B cell (primary cell): ENCODE measurements at regions of chr3 and their contacts with region 1.

Region 1: GRCh38 chr3:9792405-9793160 is at the starts of genes ARPC4 and TADA3:
- DNase-seq: peak; percentile 99
- ATAC-seq: peak; percentile 77
- H3K4me3 ChIP-seq: peak within 1 kb of the TSS; percentile 78 to 99 (median 94)
- H3K4me3 Mint-ChIP-seq: peak within 1 kb of the TSS; percentile 99
- H3K27ac ChIP-seq: peak within 1 kb of the TSS; percentile 93 to 99
- H3K27ac Mint-ChIP-seq: peak within 1 kb of the TSS; percentile 100
- H3K4me1 ChIP-seq: peaks cover 51 to 63% of the 10 kb centered on the region in 2 donors
- H3K4me1 Mint-ChIP-seq: peaks cover 57% of the 10 kb centered on the region
- H3K27me3 ChIP-seq: no peaks in the 10 kb centered on the region
- H3K27me3 Mint-ChIP-seq: no peaks in the 10 kb centered on the region
- CTCF ChIP-seq: no peak
- total RNA-seq, gene ARPC4: 174 and 179 TPM in 2 replicates
- total RNA-seq, gene TADA3: 43.4 and 45.6 TPM in 2 replicates

Region 2: DNA sequence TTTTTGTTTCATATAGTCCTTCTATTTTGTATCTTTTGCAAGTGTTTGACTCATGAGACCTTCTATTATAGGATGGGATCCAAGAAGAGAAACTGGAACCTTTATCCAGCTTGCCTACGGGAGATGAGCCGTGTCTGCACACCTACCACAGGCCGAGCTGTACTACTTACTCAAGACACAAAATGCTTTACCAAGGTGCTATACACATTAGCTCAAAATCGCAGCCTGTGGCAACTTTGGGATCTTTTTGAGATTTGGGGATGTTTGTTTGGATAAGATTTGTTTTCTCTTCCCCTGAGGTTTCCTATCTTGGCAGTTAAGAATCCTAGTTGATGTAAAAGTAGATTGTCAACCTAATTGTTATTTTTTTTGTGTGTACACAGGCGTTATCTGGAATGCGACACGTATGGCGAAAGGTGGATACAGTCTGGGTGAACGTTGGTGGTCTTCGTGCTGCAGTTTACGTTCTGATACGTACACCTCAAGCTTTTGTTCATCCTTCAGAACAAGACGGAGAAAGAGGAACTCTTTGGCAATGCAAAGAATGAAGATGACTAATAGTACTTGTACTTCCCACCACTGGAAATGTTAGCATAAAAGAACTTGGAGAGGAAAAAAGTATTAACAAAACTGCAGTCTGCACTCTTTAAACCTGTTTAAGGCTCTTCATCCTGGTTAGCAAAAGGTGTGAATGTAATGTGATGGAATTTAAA is 408.3 kb before region 1 on chr3:
- CTCF ChIA-PET with region 1: no interaction called
- POLR2A ChIA-PET with region 1: no interaction called
- intact Hi-C with region 1: no loop called
- DNase-seq: no peak
- ATAC-seq: no peak
- H3K4me3 ChIP-seq: no peak overlapping the region
- H3K4me3 Mint-ChIP-seq: no peak overlapping the region
- H3K27ac ChIP-seq: peak overlapping the region in 1 of 2 donors; percentile 48
- H3K27ac Mint-ChIP-seq: no peak overlapping the region
- H3K4me1 ChIP-seq: no peaks in the 10 kb centered on the region
- H3K4me1 Mint-ChIP-seq: peaks cover 9% of the 10 kb centered on the region
- H3K27me3 ChIP-seq: no peaks in the 10 kb centered on the region
- H3K27me3 Mint-ChIP-seq: no peaks in the 10 kb centered on the region
- CTCF ChIP-seq: no peak

Region 3: DNA sequence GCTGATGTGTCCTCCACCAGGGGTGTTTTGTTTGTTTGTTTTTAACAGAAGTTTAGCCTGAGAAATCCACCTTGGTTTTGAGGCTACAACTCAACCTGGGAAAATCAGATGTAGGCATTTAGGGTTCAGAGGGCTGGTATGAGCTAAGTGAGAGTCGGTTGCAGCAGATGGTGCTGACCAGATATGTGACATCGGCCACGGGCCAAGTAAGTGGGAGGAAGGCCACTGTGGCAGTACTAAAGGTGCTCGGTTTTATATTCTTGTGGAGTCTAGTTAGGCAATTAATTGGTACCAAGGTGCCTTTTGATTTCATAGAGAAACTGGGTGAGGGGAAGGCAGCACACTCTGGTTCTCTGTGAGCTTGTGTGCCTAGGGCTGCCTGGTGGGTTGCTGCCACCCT is 132.7 kb before region 1 on chr3:
- CTCF ChIA-PET with region 1: no interaction called
- POLR2A ChIA-PET with region 1: no interaction called
- intact Hi-C with region 1: no loop called
- DNase-seq: no peak
- ATAC-seq: no peak
- H3K4me3 ChIP-seq: no peak overlapping the region
- H3K4me3 Mint-ChIP-seq: no peak overlapping the region
- H3K27ac ChIP-seq: no peak overlapping the region
- H3K27ac Mint-ChIP-seq: no peak overlapping the region
- H3K4me1 ChIP-seq: peaks cover 2 to 14% of the 10 kb centered on the region in 2 donors
- H3K4me1 Mint-ChIP-seq: peaks cover 25% of the 10 kb centered on the region
- H3K27me3 ChIP-seq: no peaks in the 10 kb centered on the region
- H3K27me3 Mint-ChIP-seq: no peaks in the 10 kb centered on the region
- CTCF ChIP-seq: no peak

Region 4: GRCh38 chr3:9749645-9750555 is 42.7 kb before region 1 on chr3 and contains the start of gene OGG1:
- CTCF ChIA-PET with region 1: interaction called, 3 read pairs
- POLR2A ChIA-PET with region 1: interaction called, 39 read pairs
- intact Hi-C with region 1: loop called (anchors 1 kb)
- DNase-seq: peak; percentile 98
- ATAC-seq: peak; percentile 90
- H3K4me3 ChIP-seq: peak within 1 kb of the TSS; percentile 53 to 87 (median 80)
- H3K4me3 Mint-ChIP-seq: peak within 1 kb of the TSS; percentile 92
- H3K27ac ChIP-seq: peak within 1 kb of the TSS; percentile 58 to 64
- H3K27ac Mint-ChIP-seq: peak within 1 kb of the TSS; percentile 94
- H3K4me1 ChIP-seq: peaks cover 31 to 36% of the 10 kb centered on the region in 2 donors
- H3K4me1 Mint-ChIP-seq: peaks cover 49% of the 10 kb centered on the region
- H3K27me3 ChIP-seq: no peaks in the 10 kb centered on the region
- H3K27me3 Mint-ChIP-seq: no peaks in the 10 kb centered on the region
- CTCF ChIP-seq: no peak
- total RNA-seq, gene OGG1: 81.6 and 90.8 TPM in 2 replicates

Region 5: GRCh38 chr3:9809615-9810432 is 17.2 kb after region 1 on chr3 and contains the start of gene TTLL3:
- CTCF ChIA-PET with region 1: interaction called, 6 read pairs
- POLR2A ChIA-PET with region 1: interaction called, 12 read pairs
- intact Hi-C with region 1: loop called (anchors 1 kb)
- DNase-seq: peak; percentile 73
- ATAC-seq: peak; percentile 68
- H3K4me3 ChIP-seq: peak within 1 kb of the TSS; percentile 32 to 79 (median 69)
- H3K4me3 Mint-ChIP-seq: peak within 1 kb of the TSS; percentile 96
- H3K27ac ChIP-seq: peak within 1 kb of the TSS; percentile 84 to 90
- H3K27ac Mint-ChIP-seq: peak within 1 kb of the TSS; percentile 99
- H3K4me1 ChIP-seq: peaks cover 24 to 30% of the 10 kb centered on the region in 2 donors
- H3K4me1 Mint-ChIP-seq: peaks cover 38% of the 10 kb centered on the region
- H3K27me3 ChIP-seq: no peaks in the 10 kb centered on the region
- H3K27me3 Mint-ChIP-seq: no peaks in the 10 kb centered on the region
- CTCF ChIP-seq: no peak
- total RNA-seq, gene TTLL3: 84.5 and 84.6 TPM in 2 replicates

Region 6: GRCh38 chr3:9890249-9891071 is 97.9 kb after region 1 on chr3 and contains the start of gene JAGN1:
- CTCF ChIA-PET with region 1: no interaction called
- POLR2A ChIA-PET with region 1: interaction called, 4 read pairs
- intact Hi-C with region 1: loop called (anchors 1 kb)
- DNase-seq: peak; percentile 95
- ATAC-seq: peak; percentile 84
- H3K4me3 ChIP-seq: peak within 1 kb of the TSS; percentile 81 to 99 (median 98)
- H3K4me3 Mint-ChIP-seq: peak within 1 kb of the TSS; percentile 99
- H3K27ac ChIP-seq: peak within 1 kb of the TSS; percentile 100
- H3K27ac Mint-ChIP-seq: peak within 1 kb of the TSS; percentile 99
- H3K4me1 ChIP-seq: peaks cover 17 to 24% of the 10 kb centered on the region in 2 donors
- H3K4me1 Mint-ChIP-seq: peaks cover 38% of the 10 kb centered on the region
- H3K27me3 ChIP-seq: no peaks in the 10 kb centered on the region
- H3K27me3 Mint-ChIP-seq: no peaks in the 10 kb centered on the region
- CTCF ChIP-seq: no peak
- total RNA-seq, gene JAGN1: 25.7 and 26.2 TPM in 2 replicates

Region 7: GRCh38 chr3:10142707-10143566 is 350.4 kb after region 1 on chr3:
- CTCF ChIA-PET with region 1: no interaction called
- POLR2A ChIA-PET with region 1: no interaction called
- intact Hi-C with region 1: loop called (anchors 1 kb)
- DNase-seq: peak; percentile 31
- ATAC-seq: no peak
- H3K4me3 ChIP-seq: peak overlapping the region; percentile 8 to 91 (median 77)
- H3K4me3 Mint-ChIP-seq: peak overlapping the region; percentile 95
- H3K27ac ChIP-seq: peak overlapping the region; percentile 88 to 96
- H3K27ac Mint-ChIP-seq: peak overlapping the region; percentile 97
- H3K4me1 ChIP-seq: peaks cover 28 to 50% of the 10 kb centered on the region in 2 donors
- H3K4me1 Mint-ChIP-seq: peaks cover 32% of the 10 kb centered on the region
- H3K27me3 ChIP-seq: no peaks in the 10 kb centered on the region
- H3K27me3 Mint-ChIP-seq: no peaks in the 10 kb centered on the region
- CTCF ChIP-seq: no peak

Region 8: DNA sequence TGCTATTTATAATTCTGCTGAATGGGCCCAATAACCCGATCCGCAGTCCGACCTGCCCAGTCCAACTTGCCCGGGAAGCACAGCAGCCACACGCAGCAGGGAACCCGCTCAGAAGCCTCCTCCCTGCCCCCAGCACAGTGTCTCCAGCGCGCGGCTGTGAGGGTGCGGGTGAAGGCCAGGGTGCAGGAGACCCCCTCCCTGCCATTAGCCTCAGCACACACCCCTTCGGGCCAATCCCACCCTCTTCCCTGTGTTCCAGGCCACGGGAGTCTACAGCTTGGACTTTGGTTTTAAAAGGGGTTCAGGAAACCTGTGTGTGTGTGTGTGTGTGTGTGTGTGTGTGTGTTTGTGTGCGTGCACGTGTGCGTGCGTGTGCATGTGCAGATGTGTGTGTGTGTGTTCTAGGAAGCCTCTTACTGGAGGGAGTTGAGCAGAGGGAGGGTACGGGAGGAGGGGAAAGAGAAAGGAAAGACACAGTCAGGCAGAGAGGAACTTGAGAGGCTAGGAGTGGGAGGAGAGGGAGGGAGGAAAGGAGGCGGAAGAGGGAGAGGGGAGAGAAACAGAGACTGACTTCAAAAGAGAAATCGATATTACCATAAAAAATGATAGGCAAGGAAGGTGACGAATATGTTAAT is 678.6 kb after region 1 on chr3:
- CTCF ChIA-PET with region 1: no interaction called
- POLR2A ChIA-PET with region 1: no interaction called
- intact Hi-C with region 1: no loop called
- DNase-seq: no peak
- ATAC-seq: no peak
- H3K4me3 ChIP-seq: no peak overlapping the region
- H3K4me3 Mint-ChIP-seq: no peak overlapping the region
- H3K27ac ChIP-seq: no peak overlapping the region
- H3K27ac Mint-ChIP-seq: no peak overlapping the region
- H3K4me1 ChIP-seq: peaks cover 0 to 4% of the 10 kb centered on the region in 2 donors
- H3K4me1 Mint-ChIP-seq: no peaks in the 10 kb centered on the region
- H3K27me3 ChIP-seq: peaks cover 0 to 54% (median 7%) of the 10 kb centered on the region in 4 experiments
- H3K27me3 Mint-ChIP-seq: peaks cover 43% of the 10 kb centered on the region
- CTCF ChIP-seq: no peak